Activated T-helper 1 cell treated with anti-CD3 and anti-CD28 coated beads, Interleukin-12 subunit alpha, Interleukin-12 subunit beta, Interleukin-2, Interleukin-4 antibody, amounts not matched to agents 30 ng/mL and 10 ng/mL and 1 ng/mL, durations not matched to agents 14 hours and 24 hours and 36 hours (primary cell): ENCODE measurements at regions of chr6 and their contacts with region 1.

Region 1: GRCh38 chr6:5260661-5261544 is at the starts of genes FARS2 and LYRM4:
- DNase-seq: peak; percentile 89
- H3K4me3 Mint-ChIP-seq: peak within 1 kb of the TSS; percentile 93
- H3K27ac Mint-ChIP-seq: peak within 1 kb of the TSS; percentile 100
- H3K4me1 Mint-ChIP-seq: peaks cover 41% of the 10 kb centered on the region
- H3K27me3 Mint-ChIP-seq: no peaks in the 10 kb centered on the region
- total RNA-seq, gene FARS2: 20.8 and 23.8 TPM in 2 replicates
- total RNA-seq, gene LYRM4: 47.1 and 48.9 TPM in 2 replicates

Region 2: DNA sequence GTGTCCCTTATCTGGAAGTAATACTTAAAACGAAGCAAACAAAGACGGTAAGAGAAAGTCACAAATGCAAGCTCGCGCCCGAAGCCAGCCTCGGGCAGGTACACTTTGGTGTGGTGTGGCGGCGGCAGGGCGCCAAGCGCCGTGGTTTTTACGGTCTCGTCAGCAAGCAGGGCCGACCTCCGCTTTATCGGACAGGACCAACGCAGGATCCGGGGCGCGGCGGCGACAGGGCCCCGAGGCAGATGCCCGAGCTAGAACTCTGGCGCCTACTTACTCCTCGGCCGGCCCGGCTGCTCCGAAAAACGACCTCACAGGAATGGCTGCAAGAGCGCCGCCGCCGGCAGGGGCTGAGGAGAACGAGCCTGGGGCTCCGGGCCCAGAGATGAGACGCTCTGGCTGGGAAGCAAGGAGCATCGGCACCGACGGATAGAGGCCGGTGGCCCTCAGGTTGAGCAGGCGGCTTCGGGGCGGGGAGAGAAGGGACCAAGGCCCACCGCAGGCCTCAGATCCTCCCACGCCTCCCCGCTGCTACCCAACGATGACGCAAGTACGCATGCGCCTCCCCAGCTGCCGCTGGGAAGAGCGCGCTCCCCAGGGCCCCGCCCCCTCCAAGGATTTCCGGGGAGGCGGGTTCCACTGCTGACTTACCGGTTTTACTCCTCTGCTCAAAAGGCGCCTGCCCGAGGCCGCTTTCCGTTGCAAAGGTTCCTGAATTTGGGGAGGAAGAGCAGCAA is 1242.6 kb before region 1 on chr6:
- intact Hi-C with region 1: loop called (anchors 5 kb)
- DNase-seq: peak; percentile 96
- H3K4me3 Mint-ChIP-seq: peak overlapping the region; percentile 99
- H3K27ac Mint-ChIP-seq: peak overlapping the region; percentile 100
- H3K4me1 Mint-ChIP-seq: peaks cover 60% of the 10 kb centered on the region
- H3K27me3 Mint-ChIP-seq: no peaks in the 10 kb centered on the region

Region 3: DNA sequence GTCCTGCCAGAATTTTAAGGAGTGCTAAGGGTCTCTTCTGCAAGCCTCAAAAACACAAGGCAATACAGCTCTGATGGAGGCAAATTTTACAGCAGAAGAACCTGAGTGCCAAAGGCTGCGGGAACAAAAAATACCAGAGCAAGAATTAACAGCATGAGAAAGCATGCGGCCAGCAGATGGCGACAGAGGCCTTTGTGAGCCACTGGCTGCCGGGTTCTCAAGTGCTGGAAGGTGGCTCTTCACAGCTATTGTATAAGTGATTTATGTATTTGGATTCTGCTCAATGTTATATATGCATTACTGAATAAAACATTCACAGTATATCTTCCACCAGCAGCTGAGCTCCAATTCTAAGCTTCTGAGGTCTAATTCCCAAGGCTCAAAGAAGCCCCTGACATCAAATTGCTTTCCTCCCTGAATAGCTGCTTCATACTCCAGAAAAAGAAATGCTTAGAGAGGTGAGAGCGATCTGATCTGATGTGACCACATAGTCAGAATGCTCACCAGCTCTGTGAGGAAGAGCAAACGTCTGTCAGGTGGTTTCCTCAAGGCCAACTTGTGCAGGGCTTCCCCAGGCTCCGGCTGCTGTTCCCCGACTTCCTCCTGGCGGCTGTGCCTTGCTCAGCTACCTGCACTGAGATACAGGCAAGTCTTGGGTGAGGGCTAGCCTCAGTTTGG is 117.1 kb before region 1 on chr6:
- intact Hi-C with region 1: loop called (anchors 1 kb)
- DNase-seq: peak; percentile 68
- H3K4me3 Mint-ChIP-seq: no peak overlapping the region
- H3K27ac Mint-ChIP-seq: no peak overlapping the region
- H3K4me1 Mint-ChIP-seq: peaks cover 10% of the 10 kb centered on the region
- H3K27me3 Mint-ChIP-seq: no peaks in the 10 kb centered on the region

Region 4: DNA sequence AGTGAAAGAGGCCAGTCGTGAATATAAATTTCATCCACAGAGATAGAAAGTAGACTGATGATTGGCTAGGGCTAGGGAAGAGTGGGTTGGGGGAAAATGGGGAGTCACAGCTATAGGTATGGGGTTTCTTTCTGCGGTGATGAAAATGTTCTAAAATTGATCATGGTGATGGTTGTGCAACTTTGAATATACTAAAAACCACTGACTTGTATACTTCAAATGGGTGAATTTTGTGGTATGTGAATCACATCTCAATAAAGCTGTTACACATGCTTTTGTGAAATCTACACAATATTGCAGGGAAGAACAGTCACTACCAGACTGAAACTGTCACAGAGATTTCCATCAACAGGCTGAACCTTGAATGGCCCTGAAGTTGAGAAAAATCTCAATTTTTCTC is 61.6 kb before region 1 on chr6:
- intact Hi-C with region 1: loop called (anchors 1 kb)
- DNase-seq: no peak
- H3K4me3 Mint-ChIP-seq: no peak overlapping the region
- H3K27ac Mint-ChIP-seq: peak overlapping the region; percentile 49
- H3K4me1 Mint-ChIP-seq: peaks cover 9% of the 10 kb centered on the region
- H3K27me3 Mint-ChIP-seq: no peaks in the 10 kb centered on the region

Region 5: GRCh38 chr6:5302995-5303622 is 42.2 kb after region 1 on chr6:
- intact Hi-C with region 1: loop called (anchors 1 kb)
- DNase-seq: peak; percentile 25
- H3K4me3 Mint-ChIP-seq: peak overlapping the region; percentile 5
- H3K27ac Mint-ChIP-seq: no peak overlapping the region
- H3K4me1 Mint-ChIP-seq: peaks cover 22% of the 10 kb centered on the region
- H3K27me3 Mint-ChIP-seq: no peaks in the 10 kb centered on the region